Transverse colon (tissue), 4 donors: ENCODE measurements at regions of chr17 and their contacts with region 1.

Region 1: DNA sequence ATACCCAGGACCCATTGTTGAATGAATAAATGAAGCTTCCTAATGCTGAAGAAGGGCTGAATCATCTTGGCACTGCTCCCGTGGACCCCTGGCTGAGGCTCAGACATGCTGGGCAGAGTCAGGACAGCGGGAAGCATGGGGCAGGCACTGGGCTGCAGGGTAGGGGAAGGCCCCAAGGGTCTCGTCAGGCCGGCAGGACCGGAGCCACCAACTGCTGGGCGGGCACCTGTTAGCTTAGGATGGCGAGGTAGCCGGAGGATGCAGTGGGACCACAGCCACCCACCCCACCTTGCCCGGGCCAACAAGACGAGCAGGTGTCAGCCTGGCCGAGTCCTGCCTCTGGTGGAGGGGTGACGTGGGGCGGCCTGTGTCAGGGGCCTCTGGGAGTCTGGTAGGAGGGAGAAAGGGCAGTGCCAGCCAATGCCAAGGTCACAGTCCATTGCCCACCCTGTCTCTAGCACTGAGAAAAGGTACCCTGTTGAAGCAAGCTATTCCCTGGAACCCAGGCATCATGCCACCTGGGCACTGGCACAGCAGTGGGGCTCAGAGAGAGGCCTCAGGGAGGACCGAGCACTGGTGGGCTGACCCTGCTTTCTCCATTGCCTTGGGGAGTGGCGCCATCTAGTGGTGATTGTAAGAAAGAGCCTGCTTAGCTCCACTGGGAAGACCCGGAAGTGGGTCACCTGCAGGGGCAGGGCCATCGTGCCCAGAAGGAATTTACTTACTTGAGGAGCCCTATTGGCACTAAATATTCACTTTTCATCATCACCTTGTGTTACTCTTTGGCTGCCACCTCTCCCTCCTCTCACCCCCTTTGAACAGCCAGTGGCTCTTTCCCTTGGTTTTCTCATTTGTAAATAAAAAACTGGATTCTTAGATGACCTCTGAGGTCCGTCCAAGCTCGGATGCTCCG is 3.0 kb upstream of the DLX3 start:
- DNase-seq: peak; percentile 83
- H3K4me3 ChIP-seq: no peak overlapping the region
- H3K27ac ChIP-seq: no peak overlapping the region
- H3K4me1 ChIP-seq: peaks cover 17 to 31% (median 27%) of the 10 kb centered on the region in 4 donors
- H3K27me3 ChIP-seq: peaks cover 98% of the 10 kb centered on the region
- CTCF ChIP-seq: peak; percentile 92 to 97 (median 96)
- EP300 ChIP-seq: no peak
- POLR2A ChIP-seq: no peak

Region 2: GRCh38 chr17:49861150-49861892 is 136.7 kb before region 1 on chr17:
- in situ Hi-C with region 1: loop called (anchors 5 to 10 kb)
- intact Hi-C with region 1: loop called (anchors 5 kb)
- DNase-seq: peak; percentile 25
- H3K4me3 ChIP-seq: no peak overlapping the region
- H3K27ac ChIP-seq: no peak overlapping the region
- H3K4me1 ChIP-seq: peaks cover 0 to 3% (median 1%) of the 10 kb centered on the region in 4 donors
- H3K27me3 ChIP-seq: peaks cover 15% of the 10 kb centered on the region
- CTCF ChIP-seq: peak; percentile 81 to 89 (median 87)
- EP300 ChIP-seq: no peak
- POLR2A ChIP-seq: no peak

Region 3: GRCh38 chr17:49880291-49881053 is 117.6 kb before region 1 on chr17:
- in situ Hi-C with region 1: loop called in 1 of 4 experiments (anchors 10 kb)
- intact Hi-C with region 1: loop called (anchors 5 kb)
- DNase-seq: peak; percentile 71
- H3K4me3 ChIP-seq: no peak overlapping the region
- H3K27ac ChIP-seq: no peak overlapping the region
- H3K4me1 ChIP-seq: peaks cover 0 to 8% (median 5%) of the 10 kb centered on the region in 4 donors
- H3K27me3 ChIP-seq: peaks cover 82% of the 10 kb centered on the region
- CTCF ChIP-seq: peak; percentile 91 to 99 (median 99)
- EP300 ChIP-seq: no peak
- POLR2A ChIP-seq: no peak

Region 4: DNA sequence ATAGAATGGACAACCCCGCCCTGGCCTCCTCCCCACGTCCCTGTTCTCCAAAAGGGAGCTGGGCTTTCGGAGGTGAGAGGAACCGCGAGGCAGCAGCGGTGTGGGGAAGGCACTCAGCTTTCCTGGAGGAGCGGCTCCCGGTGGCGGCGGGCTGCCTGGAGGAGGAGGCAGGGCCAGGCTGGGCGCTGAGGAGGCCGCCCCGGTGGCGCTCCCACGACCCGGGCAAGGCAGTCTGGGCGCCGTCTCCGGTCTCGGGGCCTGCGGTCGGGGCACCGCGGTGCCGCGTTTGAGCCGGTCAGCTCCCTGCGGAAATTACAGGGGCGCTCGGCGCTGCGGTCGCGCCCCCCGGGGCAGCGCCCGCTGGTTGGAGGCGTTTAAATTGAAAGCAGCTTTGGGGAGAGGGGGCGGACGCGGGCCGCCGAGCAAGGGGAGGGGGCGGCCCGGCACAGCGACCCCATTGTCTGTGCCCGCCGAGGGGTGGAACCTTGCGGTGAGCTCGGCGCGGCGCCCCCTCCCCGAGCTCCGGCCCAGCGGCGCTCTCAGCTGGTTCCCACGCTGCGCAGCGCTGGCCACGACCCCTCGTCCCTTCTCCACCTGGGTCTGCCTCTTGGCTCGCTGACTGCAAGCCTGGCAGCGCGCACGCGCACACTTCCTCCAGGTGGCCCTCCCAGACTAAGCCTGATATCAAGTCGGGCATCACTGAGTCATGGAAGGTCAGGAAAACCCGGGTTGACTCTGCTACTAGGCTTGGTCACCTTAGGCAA is 87.8 kb before region 1 on chr17:
- in situ Hi-C with region 1: no loop called
- intact Hi-C with region 1: no loop called
- DNase-seq: no peak
- H3K4me3 ChIP-seq: peak overlapping the region in 1 of 4 donors; percentile 16
- H3K27ac ChIP-seq: no peak overlapping the region
- H3K4me1 ChIP-seq: peaks cover 0 to 5% (median 2%) of the 10 kb centered on the region in 4 donors
- H3K27me3 ChIP-seq: peaks cover 94% of the 10 kb centered on the region
- CTCF ChIP-seq: no peak
- EP300 ChIP-seq: no peak
- POLR2A ChIP-seq: no peak

Region 5: GRCh38 chr17:49941427-49941826 is 56.6 kb before region 1 on chr17:
- in situ Hi-C with region 1: no loop called
- intact Hi-C with region 1: loop called (anchors 2 kb)
- DNase-seq: no peak
- H3K4me3 ChIP-seq: no peak overlapping the region
- H3K27ac ChIP-seq: no peak overlapping the region
- H3K4me1 ChIP-seq: no peaks in the 10 kb centered on the region
- H3K27me3 ChIP-seq: peaks cover 72% of the 10 kb centered on the region
- CTCF ChIP-seq: no peak
- EP300 ChIP-seq: no peak
- POLR2A ChIP-seq: no peak

Region 6: DNA sequence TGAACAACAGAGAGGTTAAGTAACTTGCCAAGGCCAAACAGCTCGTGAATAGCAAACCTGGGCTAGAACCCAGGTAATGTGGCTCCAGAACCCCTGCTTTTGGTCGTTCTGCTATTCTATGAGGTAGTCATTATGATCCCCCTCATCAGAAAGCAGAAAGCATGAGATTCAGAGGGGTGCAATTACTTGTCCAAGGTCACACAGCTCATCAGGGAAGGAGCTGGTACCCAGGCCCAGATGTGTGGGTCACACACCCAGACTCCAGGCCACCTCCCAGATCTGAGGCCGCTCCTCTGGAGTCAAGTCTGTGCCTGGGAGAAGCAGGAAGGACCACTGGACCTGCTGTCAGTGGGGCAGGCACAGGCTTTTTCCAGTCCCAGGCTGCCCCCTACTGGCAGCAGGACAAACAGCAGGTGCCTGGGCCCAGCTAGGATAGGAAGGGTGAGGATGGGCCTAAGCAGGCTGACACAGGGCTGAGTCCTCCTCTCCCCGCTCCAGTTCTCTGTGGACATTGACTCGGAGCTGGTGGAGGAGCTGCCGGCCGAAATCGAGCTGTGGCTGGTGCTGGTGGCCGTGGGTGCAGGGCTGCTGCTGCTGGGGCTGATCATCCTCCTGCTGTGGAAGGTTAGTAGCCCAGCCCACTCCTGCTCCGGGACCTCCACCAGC is 89.3 kb after region 1 on chr17:
- in situ Hi-C with region 1: no loop called
- intact Hi-C with region 1: no loop called
- DNase-seq: peak; percentile 78
- H3K4me3 ChIP-seq: no peak overlapping the region
- H3K27ac ChIP-seq: no peak overlapping the region
- H3K4me1 ChIP-seq: no peaks in the 10 kb centered on the region
- H3K27me3 ChIP-seq: no peaks in the 10 kb centered on the region
- CTCF ChIP-seq: peak; percentile 94 to 97 (median 96)
- EP300 ChIP-seq: no peak
- POLR2A ChIP-seq: no peak